ENCODE measurements at regions of chr12 and their contacts with region 1.

Region 1: DNA sequence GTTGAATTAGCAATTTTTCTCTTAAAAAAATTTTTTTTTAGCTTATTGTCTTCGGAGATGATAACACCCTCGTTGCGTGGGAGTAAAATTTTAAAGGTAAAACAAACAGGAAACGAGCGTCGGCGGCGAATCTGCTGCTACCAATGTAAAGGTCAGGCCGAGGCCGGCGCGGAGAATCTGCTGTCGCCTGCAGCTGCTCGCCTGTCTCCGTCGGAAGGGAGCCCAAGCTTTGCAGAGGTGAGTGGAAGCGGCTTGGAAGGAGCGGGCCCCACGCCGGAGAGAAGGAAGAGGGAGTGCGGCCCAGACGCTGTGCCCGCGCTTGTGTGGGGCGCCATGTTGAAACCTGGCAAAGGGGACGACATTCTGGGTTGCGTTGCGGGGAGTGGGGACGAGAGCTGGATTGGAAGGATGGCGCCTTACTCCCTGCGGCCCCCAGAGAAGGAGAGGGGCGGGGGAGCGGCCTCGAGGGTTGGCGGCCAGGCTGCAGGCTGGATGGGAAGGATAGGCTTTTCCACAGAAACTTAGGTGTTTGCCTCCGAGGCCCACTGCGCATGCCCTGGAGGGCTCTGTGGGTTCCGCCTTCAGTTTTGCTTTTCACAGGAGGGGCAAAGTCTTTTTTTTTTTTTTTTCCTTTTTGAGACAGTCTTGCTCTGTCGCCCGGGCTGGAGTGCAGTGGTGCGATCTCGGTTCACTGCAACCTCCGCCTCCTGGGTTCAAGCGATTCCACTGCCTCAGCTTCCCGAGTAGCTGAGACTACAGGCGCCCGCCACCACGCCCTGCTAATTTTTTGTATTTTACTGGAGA is at the start of gene SNRNP35:
- DNase-seq: peak; percentile 71 to 92 (median 83)
- ATAC-seq: peak; percentile 77 to 84 (median 78)
- H3K4me3 ChIP-seq: peak within 1 kb of the TSS; percentile 84 to 100
- H3K4me3 Mint-ChIP-seq: peak within 1 kb of the TSS; percentile 98 to 100 (median 100)
- H3K27ac ChIP-seq: peak within 1 kb of the TSS; percentile 99
- H3K27ac Mint-ChIP-seq: peak within 1 kb of the TSS; percentile 100
- H3K4me1 ChIP-seq: peaks cover 5 to 32% of the 10 kb centered on the region in 2 experiments
- H3K4me1 Mint-ChIP-seq: peaks cover 31 to 39% (median 32%) of the 10 kb centered on the region in 3 donors
- H3K27me3 ChIP-seq: no peaks in the 10 kb centered on the region
- H3K27me3 Mint-ChIP-seq: no peaks in the 10 kb centered on the region
- total RNA-seq, gene SNRNP35: 32.6 to 46.1 (median 43.2) TPM

Region 2: GRCh38 chr12:123075646-123076171 is 382.5 kb before region 1 on chr12:
- CTCF ChIA-PET with region 1: no interaction called
- POLR2A ChIA-PET with region 1: no interaction called
- DNase-seq: peak; percentile 53 to 81 (median 69)
- ATAC-seq: peak; percentile 84 to 91 (median 85)
- H3K4me3 ChIP-seq: peak overlapping the region; percentile 50 to 68
- H3K4me3 Mint-ChIP-seq: peak overlapping the region; percentile 77 to 84 (median 82)
- H3K27ac ChIP-seq: peak overlapping the region; percentile 87
- H3K27ac Mint-ChIP-seq: peak overlapping the region; percentile 92 to 96
- H3K4me1 ChIP-seq: peaks cover 35 to 71% of the 10 kb centered on the region in 2 experiments
- H3K4me1 Mint-ChIP-seq: peaks cover 63 to 67% (median 65%) of the 10 kb centered on the region in 3 donors
- H3K27me3 ChIP-seq: no peaks in the 10 kb centered on the region
- H3K27me3 Mint-ChIP-seq: no peaks in the 10 kb centered on the region

Region 3: DNA sequence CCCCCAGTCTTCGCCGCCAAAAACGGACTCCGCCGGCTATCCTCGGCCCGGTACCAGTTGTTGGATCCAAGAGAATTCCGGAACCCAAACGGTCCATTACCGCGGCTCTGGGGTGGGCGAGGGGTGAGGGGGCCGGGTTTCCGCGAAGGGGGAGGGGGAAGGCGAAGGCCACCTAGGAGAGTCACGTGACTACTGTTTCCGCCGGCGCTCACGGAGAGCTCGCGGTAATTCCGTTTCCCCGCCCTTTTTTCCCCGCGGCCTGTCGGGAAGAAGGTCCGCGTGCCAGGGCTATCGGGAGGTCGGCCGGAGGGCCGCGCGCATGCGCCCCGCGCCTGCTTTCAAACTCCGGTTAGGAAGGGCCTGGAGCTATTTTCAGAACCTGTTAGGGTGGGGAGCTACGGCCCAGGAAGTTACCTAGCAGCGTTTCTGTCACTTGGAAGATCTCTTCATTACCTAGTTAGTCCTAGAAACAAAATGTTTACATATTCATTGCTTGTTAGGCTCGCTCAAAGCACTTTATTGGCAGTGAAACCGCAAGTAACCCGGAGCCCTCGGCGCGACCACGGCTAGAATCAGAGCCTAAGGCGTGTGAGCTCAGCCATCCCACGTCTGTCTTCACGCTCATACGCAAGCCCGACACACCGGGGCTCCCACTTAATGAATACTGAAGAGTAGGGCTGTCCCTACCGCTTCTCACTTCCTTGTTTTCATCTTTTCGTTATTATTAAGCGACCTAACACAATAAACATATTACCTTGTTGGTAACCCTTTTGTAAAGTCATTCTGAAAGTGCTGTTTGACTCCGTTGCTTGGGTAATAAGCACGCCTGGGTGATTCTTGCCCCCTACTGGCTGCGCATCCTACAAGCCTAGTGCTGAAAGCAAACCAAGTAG is 92.9 kb before region 1 on chr12:
- CTCF ChIA-PET with region 1: interaction called in 1 of 2 experiments, 11 read pairs
- POLR2A ChIA-PET with region 1: interaction called in 1 of 2 experiments, 9 read pairs
- DNase-seq: peak; percentile 92 to 99 (median 97)
- ATAC-seq: peak; percentile 83 to 84 (median 83)
- H3K4me3 ChIP-seq: peak overlapping the region; percentile 87 to 89
- H3K4me3 Mint-ChIP-seq: peak overlapping the region; percentile 84 to 90 (median 86)
- H3K27ac ChIP-seq: peak overlapping the region; percentile 93
- H3K27ac Mint-ChIP-seq: peak overlapping the region; percentile 97
- H3K4me1 ChIP-seq: peaks cover 10 to 39% of the 10 kb centered on the region in 2 experiments
- H3K4me1 Mint-ChIP-seq: peaks cover 23 to 31% (median 29%) of the 10 kb centered on the region in 3 donors
- H3K27me3 ChIP-seq: no peaks in the 10 kb centered on the region
- H3K27me3 Mint-ChIP-seq: no peaks in the 10 kb centered on the region

Measured in T-cell (primary cell).